PC-9 (cell line): ENCODE measurements at regions of chr6 and their contacts with region 1.

Region 1: GRCh38 chr6:143060354-143060805 is 309 bp upstream of the AIG1 start:
- DNase-seq: peak; percentile 75 to 84
- H3K4me3 ChIP-seq: peak overlapping the region; percentile 66
- H3K27ac ChIP-seq: peak overlapping the region; percentile 97
- H3K4me1 ChIP-seq: peaks cover 51% of the 10 kb centered on the region
- H3K27me3 ChIP-seq: no peaks in the 10 kb centered on the region
- CTCF ChIP-seq: no peak; the same call in 1 of the 2 replicates

Region 2: DNA sequence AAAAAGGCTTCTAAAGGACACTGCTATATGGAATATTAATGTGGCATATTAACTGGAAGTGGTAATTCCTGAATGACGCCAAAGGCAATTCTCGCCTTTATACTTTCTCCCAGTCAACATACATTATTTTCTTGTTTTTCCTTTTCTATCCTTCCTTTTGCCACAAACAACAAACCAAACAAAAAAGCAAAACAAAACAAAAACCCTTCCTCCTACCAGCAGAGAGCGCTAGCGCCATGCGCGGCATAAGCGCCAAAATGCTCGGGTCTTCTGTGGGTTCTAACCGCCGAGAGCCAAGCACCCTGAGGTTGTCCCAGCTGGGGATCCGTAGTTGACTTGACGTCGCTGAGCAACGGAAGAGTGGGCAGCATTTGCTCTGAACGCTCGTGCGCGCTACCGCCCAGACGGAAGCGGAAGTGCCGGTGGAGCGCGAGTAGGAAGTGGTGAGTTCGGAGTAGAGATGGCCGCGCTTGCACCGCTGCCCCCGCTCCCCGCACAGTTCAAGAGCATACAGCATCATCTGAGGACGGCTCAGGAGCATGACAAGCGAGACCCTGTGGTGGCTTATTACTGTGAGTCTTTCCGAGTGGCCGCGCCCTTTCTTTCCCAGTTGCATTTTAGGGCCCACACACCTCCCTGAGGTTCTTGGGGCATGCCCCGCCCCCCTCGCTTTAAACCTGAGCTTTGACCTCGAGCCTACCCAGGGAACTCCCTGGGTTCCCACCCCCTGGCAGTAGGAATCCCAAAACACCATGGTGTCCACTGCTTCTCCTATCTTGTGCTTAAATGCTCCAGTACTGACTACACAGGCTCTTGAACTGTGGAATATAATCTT is 913.3 kb before region 1 on chr6 and contains the starts of genes NMBR and VTA1:
- CTCF ChIA-PET with region 1: no interaction called
- POLR2A ChIA-PET with region 1: no interaction called
- intact Hi-C with region 1: loop called (anchors 2 kb)
- DNase-seq: peak; percentile 95
- H3K4me3 ChIP-seq: peak within 1 kb of the TSS; percentile 92
- H3K27ac ChIP-seq: peak within 1 kb of the TSS; percentile 25; the same call in 1 of the 2 replicates
- H3K4me1 ChIP-seq: peaks cover 19% of the 10 kb centered on the region; the same call in 1 of the 2 replicates
- H3K27me3 ChIP-seq: no peaks in the 10 kb centered on the region
- CTCF ChIP-seq: peak; percentile 84
- total RNA-seq, gene NMBR: 0.35 TPM in 1 of 2 replicates, not detected in the other
- total RNA-seq, gene VTA1: 29.5 and 52.0 TPM in 2 replicates

Region 3: GRCh38 chr6:142566628-142567396 is 493.6 kb before region 1 on chr6:
- CTCF ChIA-PET with region 1: no interaction called
- POLR2A ChIA-PET with region 1: no interaction called
- intact Hi-C with region 1: loop called (anchors 5 kb)
- DNase-seq: peak; percentile 44 to 56
- H3K4me3 ChIP-seq: no peak overlapping the region
- H3K27ac ChIP-seq: no peak overlapping the region
- H3K4me1 ChIP-seq: peaks cover 20% of the 10 kb centered on the region
- H3K27me3 ChIP-seq: no peaks in the 10 kb centered on the region
- CTCF ChIP-seq: peak; percentile 90

Region 4: GRCh38 chr6:142756215-142756634 is 304.2 kb before region 1 on chr6:
- CTCF ChIA-PET with region 1: no interaction called
- POLR2A ChIA-PET with region 1: interaction called, 7 read pairs
- intact Hi-C with region 1: loop called (anchors 5 kb)
- DNase-seq: peak; percentile 86 to 97
- H3K4me3 ChIP-seq: no peak overlapping the region
- H3K27ac ChIP-seq: peak overlapping the region; percentile 54
- H3K4me1 ChIP-seq: peaks cover 22% of the 10 kb centered on the region
- H3K27me3 ChIP-seq: no peaks in the 10 kb centered on the region
- CTCF ChIP-seq: 0 out of 2 replicates have a peak, but pooled peaks have one; percentile 22

Region 5: DNA sequence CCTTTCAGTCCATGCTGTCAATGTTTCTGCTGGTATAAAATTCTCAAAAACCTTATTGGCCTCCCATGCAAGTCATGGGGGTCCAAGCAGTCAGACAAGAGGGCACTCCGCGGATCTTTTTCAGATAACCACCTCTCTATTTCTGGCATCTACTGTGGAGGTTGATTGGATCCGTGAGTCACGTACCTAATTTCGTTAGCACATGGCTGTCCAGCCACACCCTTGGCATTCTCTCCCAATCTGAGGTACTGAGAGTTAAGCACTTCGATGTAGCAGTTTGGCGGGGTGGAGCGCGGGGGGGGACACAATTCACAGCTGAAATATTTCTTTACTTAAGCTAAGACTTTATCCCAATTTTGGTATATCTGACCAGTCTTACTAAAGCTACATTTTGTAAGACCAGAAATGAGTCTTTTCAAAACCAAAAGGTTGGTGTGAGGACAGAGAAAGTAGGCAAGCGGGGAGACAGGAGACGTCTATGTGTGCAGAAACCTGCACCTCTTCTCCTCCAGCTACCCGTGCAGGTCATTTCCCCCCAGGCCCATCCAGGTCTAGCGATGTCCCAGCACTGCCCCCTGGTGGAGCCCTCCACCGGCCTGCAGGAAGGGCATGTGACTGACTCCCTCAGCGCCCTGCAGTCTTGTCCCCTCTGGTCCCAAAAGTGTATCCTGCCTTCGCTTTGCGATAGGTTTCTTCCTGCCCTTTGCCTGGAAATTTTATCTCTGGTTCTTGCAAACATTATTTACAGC is 277.0 kb after region 1 on chr6:
- CTCF ChIA-PET with region 1: no interaction called
- POLR2A ChIA-PET with region 1: no interaction called
- intact Hi-C with region 1: loop called (anchors 10 kb)
- DNase-seq: peak in 1 of 2 experiments; percentile 26
- H3K4me3 ChIP-seq: no peak overlapping the region
- H3K27ac ChIP-seq: peak overlapping the region; percentile 87
- H3K4me1 ChIP-seq: peaks cover 29% of the 10 kb centered on the region
- H3K27me3 ChIP-seq: no peaks in the 10 kb centered on the region
- CTCF ChIP-seq: 0 out of 2 replicates have a peak, but pooled peaks have one; percentile 36